AG04449 (cell line): ENCODE measurements at regions of chr3 and their contacts with region 1.

Region 1: GRCh38 chr3:133464573-133464972 is 64.7 kb downstream of the BFSP2 start:
- DNase-seq: no peak
- H3K4me3 ChIP-seq: no peak overlapping the region
- CTCF ChIP-seq: peak; percentile 40

Region 2: GRCh38 chr3:133211449-133211848 is 253.1 kb before region 1 on chr3:
- CTCF ChIA-PET with region 1: no interaction called
- POLR2A ChIA-PET with region 1: no interaction called
- DNase-seq: no peak
- H3K4me3 ChIP-seq: no peak overlapping the region
- CTCF ChIP-seq: no peak

Region 3: GRCh38 chr3:133487920-133488540 is 23.5 kb after region 1 on chr3:
- CTCF ChIA-PET with region 1: interaction called, 12 read pairs
- POLR2A ChIA-PET with region 1: no interaction called
- DNase-seq: no peak
- H3K4me3 ChIP-seq: no peak overlapping the region
- CTCF ChIP-seq: peak; percentile 28

Region 4: GRCh38 chr3:133570139-133570936 is 105.8 kb after region 1 on chr3:
- CTCF ChIA-PET with region 1: interaction called, 11 read pairs
- POLR2A ChIA-PET with region 1: interaction called, 6 read pairs
- DNase-seq: no peak
- H3K4me3 ChIP-seq: no peak overlapping the region
- CTCF ChIP-seq: no peak

Region 5: GRCh38 chr3:133915685-133916658 is 451.4 kb after region 1 on chr3:
- CTCF ChIA-PET with region 1: no interaction called
- POLR2A ChIA-PET with region 1: no interaction called
- DNase-seq: no peak
- H3K4me3 ChIP-seq: no peak overlapping the region
- CTCF ChIP-seq: no peak